ENCODE measurements at regions of chr1 and their contacts with region 1.

Region 1: DNA sequence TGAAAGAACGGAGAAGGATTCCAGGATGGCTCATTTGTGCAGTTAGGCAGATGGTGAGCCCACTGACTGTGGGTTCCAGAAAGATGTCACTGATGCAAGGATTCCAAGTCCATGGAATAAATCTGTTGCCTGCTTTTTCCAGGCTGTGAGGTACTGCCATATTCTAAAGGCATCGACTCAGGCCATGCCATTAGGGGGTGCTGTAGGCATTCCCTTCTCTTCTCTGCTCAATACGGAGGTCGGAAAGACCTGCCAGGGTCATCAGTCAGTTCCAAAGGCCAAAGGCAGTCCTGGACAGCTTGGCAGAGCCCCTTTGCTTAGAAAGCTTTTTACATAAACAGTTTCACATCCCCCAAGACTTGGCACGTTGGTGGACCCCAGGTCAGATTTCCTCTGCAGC is 31.7 kb upstream of the TMEM125 start:
- DNase-seq: peak; percentile 47 to 73
- H3K4me3 ChIP-seq: no peak overlapping the region
- H3K27ac ChIP-seq: no peak overlapping the region
- H3K4me1 ChIP-seq: peaks cover 12% of the 10 kb centered on the region
- H3K27me3 ChIP-seq: no peaks in the 10 kb centered on the region
- CTCF ChIP-seq: peak; percentile 84

Region 2: DNA sequence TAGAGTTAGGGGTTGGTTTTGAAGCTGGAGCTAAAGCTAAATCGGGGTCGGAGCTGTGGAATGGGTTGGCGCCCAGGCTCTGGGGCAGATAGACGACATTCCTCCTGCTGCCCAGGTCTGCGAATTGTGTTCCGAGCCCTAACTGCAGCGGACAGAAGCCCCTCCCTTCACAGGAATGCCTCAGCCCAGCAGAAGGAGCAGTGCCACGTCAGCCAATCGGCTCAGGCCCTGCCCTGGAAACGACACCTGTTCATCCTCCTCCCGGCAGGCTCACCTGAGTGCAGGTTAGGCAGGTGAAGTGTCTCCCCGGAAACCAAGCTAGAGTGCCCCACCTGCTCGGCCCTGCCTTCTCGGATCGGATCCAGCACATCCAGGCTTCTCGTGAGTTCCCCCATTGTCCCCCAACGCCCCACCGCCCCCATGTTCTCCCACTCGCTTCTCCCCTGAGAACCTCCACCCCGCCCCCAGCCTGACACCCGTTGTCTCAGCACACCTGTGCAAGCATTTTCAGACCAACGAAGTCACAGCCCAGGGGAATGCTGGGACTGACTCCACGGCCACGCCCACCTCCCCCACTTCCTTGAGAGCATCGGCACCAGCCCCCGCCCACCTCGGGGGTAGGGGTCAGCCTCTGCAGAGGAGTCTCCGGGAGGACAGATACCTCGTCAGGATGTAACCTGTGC is 32.5 kb after region 1 on chr1:
- CTCF ChIA-PET with region 1: no interaction called
- POLR2A ChIA-PET with region 1: no interaction called
- intact Hi-C with region 1: loop called (anchors 1 kb)
- DNase-seq: peak; percentile 94 to 96
- H3K4me3 ChIP-seq: peak overlapping the region; percentile 59
- H3K27ac ChIP-seq: peak overlapping the region; percentile 81
- H3K4me1 ChIP-seq: peaks cover 25% of the 10 kb centered on the region
- H3K27me3 ChIP-seq: no peaks in the 10 kb centered on the region
- CTCF ChIP-seq: no peak

Region 3: GRCh38 chr1:43329995-43330751 is 92.1 kb after region 1 on chr1:
- CTCF ChIA-PET with region 1: interaction called, 11 read pairs
- POLR2A ChIA-PET with region 1: no interaction called
- intact Hi-C with region 1: no loop called
- DNase-seq: peak; percentile 61 to 77
- H3K4me3 ChIP-seq: no peak overlapping the region
- H3K27ac ChIP-seq: peak overlapping the region; percentile 23; the same call in 1 of the 2 replicates
- H3K4me1 ChIP-seq: peaks cover 15% of the 10 kb centered on the region
- H3K27me3 ChIP-seq: no peaks in the 10 kb centered on the region
- CTCF ChIP-seq: no peak

Region 4: DNA sequence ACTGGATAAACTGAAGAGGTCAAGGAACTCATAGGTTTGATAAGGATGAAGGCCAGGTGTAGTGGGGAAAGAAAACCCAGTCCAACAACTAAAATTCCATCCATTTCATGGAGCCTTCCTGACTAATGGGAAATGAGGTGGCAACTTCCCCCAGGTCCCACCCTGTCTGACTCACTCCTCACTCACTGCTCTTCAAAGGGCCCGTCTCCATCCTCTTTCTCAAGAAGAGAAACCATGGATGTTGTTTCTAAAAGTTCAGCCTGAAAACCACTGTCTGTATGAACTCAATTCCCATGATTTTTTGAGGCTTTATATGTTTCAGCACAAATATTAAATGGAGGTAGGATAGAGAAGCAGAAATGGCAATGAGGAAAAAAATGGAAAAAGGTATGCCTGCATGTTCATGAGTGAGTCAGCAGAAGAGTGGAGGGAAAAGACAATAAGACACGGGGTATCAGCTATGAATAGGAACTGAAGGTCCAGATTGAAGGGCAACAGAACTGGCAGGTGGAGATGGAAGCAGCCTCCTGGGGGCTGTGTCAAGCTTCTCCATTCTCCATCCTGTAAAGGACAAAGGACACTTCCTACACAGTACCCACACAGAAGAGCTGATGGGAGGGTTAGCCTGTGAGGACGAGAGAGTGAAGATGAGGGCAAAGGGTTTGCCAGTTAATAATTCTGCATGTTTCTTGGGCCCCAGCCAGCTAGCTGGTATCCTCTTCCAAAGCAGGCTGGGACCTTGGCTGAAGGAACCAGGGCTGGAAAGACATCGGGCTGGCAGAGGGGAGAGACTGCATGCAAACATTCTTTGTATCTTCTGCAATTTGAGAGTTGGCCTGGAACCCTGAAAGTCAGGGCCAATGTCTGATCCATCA is 135.2 kb after region 1 on chr1:
- CTCF ChIA-PET with region 1: interaction called, 3 read pairs
- POLR2A ChIA-PET with region 1: no interaction called
- intact Hi-C with region 1: loop called (anchors 1 kb)
- DNase-seq: peak; percentile 68 to 88
- H3K4me3 ChIP-seq: no peak overlapping the region
- H3K27ac ChIP-seq: peak overlapping the region; percentile 85
- H3K4me1 ChIP-seq: peaks cover 52% of the 10 kb centered on the region
- H3K27me3 ChIP-seq: no peaks in the 10 kb centered on the region
- CTCF ChIP-seq: no peak

Measured in PC-9 (cell line).